Cardiac septum (tissue), 1 donor: ENCODE measurements at regions of chrX and their contacts with region 1.

Region 1: DNA sequence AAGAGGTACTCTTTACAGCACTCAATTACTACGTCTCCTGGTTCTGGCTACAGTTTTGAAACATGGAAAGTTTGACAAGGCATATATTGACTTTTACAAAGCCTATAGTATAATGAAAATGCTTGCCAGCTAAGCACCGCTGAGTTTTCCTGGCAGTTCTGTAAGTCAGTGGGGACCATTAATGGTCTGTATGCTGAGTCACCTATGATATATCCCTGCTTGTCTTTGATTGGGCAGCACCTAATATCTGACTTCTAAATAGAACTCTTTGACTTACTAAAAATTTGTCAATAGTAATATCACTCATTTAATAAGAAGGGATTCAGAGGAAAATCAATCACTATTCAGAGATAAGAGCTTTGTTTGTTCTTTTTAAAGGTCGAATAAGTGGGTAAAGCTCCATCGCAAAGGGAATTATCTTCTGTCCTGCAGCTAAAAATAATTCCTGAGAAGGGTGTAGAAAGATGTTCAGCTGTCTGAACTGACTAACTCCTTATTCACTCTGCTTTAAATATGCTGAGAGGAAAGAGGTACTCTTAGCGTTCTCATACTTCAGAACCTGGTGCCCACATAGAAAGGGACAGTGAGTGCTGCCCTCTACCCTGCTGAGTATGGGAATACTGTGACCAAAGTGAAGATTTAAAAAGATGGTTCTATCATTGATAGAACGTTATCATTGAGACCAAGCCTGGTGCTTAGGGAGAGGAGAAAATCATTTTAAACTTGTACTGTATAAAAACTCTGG is 959 bp downstream of the SMPX start:
- DNase-seq: no peak

Region 2: GRCh38 chrX:21708116-21708515 is 48.8 kb before region 1 on chrX:
- intact Hi-C with region 1: no loop called
- DNase-seq: no peak

Region 3: DNA sequence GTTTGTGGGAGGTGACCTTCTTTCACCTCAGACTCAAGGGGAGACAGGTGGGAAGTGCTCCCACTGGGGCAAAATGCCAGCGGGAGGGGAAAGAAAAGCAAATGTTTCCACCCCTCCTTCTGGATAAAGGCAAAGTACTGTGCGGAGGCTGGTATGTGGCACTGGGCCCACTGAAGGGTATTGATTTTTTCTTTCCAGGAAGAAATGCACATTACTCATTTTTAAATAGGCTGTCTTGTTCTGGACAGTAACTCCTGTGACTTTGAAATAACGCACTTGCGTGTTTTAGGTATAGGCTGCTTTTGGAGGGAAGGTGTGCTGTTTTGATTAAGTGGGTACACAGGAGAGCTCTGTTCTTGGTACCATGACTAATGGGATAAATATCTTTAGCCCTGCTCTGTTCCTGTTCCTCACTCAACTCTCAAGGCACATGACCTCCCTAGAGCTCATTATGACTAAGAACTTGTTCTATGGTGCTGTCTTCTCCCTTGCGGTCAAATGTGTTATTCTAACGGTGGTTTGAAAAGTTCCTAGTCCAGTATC is 41.8 kb after region 1 on chrX:
- intact Hi-C with region 1: loop called (anchors 5 kb)
- DNase-seq: no peak

Region 4: GRCh38 chrX:21940356-21940829 is 183.4 kb after region 1 on chrX and contains the start of gene SMS:
- intact Hi-C with region 1: loop called (anchors 10 kb)
- DNase-seq: peak; percentile 89
- total RNA-seq, gene SMS: 74.9 TPM